Right ventricle myocardium inferior (tissue), 1 donor: ENCODE measurements at regions of chr4 and their contacts with region 1.

Region 1: DNA sequence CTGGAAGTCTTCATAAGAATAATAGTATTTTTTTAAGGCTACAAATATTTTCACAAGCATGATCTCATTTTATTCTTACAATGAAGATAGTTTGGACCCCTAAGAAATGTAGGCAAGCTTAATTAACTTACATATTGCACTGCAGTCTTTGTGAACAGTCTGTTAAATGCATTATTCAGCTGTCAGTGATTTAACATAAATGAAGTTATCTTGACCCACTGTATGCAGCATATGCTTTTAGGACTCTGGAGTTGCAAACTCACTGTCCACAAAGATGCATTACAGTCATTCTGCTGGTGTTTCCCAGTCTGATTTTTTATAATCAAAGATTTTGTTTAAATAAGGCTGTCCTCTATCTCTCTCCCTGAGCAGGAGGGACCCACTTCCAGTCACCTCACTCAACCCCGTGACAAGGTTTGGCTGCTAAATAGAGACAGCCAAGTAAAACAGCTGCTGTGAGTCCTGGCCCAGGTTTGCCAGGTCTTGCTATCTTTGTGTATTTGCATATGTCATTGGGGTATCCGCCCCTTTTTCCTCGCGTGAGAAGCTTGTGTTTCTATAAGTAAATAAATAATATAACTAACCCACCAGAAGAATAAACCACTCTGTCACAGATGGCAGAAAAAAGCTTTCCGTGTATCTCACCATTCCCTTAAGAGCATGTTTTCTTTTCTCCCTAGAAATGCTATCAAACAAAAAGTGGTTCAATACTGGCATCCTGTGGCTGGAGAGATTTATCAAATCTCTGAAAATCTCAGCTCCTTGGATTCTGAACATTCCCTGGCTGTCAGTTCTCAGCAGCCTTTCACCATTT is 67.0 kb downstream of the SLC7A11 start:
- DNase-seq: no peak
- ATAC-seq: peak; percentile 79

Region 2: GRCh38 chr4:138114434-138114833 is 60.8 kb before region 1 on chr4:
- intact Hi-C with region 1: no loop called
- DNase-seq: no peak
- ATAC-seq: no peak

Region 3: GRCh38 chr4:138158746-138159297 is 16.4 kb before region 1 on chr4:
- intact Hi-C with region 1: no loop called
- DNase-seq: no peak
- ATAC-seq: no peak

Region 4: DNA sequence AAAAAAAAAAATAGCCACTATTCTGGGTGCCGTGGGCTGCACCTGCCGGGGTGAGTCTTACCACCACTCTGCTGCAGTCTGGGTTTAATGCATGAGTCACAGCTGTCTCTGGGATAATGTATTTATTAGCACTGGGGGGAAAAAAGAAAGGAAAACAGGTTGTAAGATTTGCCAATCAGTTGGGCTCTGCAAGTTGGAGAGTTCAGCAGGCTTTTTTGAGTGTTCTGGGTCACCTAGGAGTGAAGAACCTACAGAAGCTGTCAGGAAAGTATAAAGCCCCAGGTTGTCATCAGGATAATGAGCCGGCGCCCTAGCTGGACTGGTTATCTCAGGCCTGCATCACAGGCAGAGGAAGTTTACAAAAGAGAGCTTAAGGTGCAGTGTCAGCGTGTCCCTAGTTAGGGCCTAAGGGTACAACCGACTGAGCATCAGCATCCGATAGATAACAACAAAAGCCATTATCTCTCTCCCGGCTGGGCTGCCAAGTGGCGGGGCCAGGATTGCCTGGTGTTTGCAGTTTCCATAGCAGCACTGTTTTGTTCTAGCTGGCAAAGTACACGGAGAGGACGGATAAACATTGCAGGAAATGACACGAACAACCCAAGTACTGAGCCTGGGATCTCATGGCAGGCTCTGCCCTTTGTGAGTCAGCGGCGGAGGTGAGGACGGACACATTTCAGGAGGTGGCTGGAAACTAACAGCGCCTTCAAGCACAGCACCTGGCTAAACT is 735.6 kb after region 1 on chr4:
- intact Hi-C with region 1: loop called (anchors 5 kb)
- DNase-seq: peak; percentile 81
- ATAC-seq: peak; percentile 98